HepG2 (cell line): ENCODE measurements at regions of chr12 and their contacts with region 1.

Region 1: GRCh38 chr12:75994186-75994731 is 37.3 kb downstream of the PHLDA1 start:
- DNase-seq: no peak
- ATAC-seq: no peak
- H3K4me3 ChIP-seq: no peak overlapping the region
- H3K27ac ChIP-seq: no peak overlapping the region
- H3K4me1 ChIP-seq: peaks cover 44% of the 10 kb centered on the region
- H3K27me3 ChIP-seq: no peaks in the 10 kb centered on the region
- CTCF ChIP-seq: no peak
- EP300 ChIP-seq: no peak
- POLR2A ChIP-seq: no peak
- RAD21 ChIP-seq: no peak

Region 2: DNA sequence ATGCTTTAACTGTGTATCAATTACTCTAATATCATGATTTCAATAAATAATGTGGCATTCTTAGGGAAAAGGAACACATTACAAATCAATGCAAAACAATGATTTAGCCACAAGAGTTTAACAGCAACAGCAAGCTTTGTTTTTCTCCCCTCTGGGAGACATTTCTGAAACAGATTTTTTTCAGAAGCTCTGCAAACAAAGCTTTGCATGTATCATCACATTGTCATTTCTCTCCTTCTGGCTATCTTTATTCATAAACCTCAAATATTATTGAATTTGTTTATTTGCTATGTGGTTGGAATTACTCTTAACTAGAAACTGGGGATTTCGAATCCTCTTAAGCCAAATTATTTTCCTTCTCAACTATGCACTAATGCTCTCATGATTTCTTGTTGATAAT is 1735.1 kb before region 1 on chr12:
- CTCF ChIA-PET with region 1: no interaction called
- POLR2A ChIA-PET with region 1: no interaction called
- in situ Hi-C with region 1: no loop called
- intact Hi-C with region 1: no loop called
- DNase-seq: no peak
- ATAC-seq: no peak
- H3K4me3 ChIP-seq: no peak overlapping the region
- H3K27ac ChIP-seq: no peak overlapping the region
- H3K4me1 ChIP-seq: no peaks in the 10 kb centered on the region
- H3K27me3 ChIP-seq: no peaks in the 10 kb centered on the region
- CTCF ChIP-seq: no peak
- EP300 ChIP-seq: no peak
- POLR2A ChIP-seq: no peak
- RAD21 ChIP-seq: no peak

Region 3: DNA sequence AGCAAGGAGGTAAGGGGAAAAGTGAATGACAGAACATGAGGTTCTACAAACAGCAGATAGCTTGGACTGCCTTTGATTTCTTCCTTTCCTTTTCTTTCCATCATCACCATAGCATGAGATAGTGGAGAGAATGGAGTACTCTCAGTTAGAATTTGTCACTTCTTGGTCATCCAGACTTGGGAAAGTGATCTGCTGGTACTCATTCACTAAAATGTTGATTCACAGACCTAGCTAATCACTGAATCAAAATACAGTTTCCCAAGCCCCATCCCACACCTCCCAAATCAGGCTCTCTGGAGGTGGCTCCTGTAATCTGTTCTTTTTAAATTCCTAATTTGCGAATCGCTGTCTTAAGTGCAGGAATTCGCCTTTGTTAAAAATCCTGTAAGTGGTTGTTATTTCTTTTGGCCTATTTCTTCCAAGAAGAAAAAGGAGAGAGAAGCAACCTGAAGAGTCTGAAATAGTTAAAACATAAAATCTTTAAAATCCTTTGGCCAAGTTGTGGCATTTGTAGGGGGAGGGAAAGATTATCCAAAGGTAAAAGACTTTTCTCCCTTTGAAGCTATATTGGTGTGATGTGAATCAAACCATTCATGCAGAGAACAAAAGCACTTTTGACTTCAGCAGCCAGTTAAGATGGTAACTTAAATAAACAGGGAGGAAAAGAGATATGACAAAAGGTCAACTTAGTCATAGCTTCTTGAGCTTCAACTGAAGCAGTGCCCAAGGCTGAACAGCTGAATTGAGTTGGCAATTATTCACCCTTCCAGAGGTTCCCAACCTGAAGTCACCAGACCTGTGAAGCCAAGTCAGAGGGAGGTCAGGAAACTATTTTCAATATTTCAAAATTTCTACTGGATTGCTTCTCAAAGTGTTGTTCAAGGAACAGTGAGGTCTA is 227.7 kb before region 1 on chr12:
- CTCF ChIA-PET with region 1: no interaction called
- POLR2A ChIA-PET with region 1: interaction called, 6 read pairs
- in situ Hi-C with region 1: no loop called
- intact Hi-C with region 1: loop called (anchors 5 kb)
- DNase-seq: peak; percentile 97
- ATAC-seq: peak; percentile 92
- H3K4me3 ChIP-seq: peak overlapping the region in 1 of 3 experiments; percentile 3; a peak in 1 of 6 replicates
- H3K27ac ChIP-seq: peak overlapping the region; percentile 86
- H3K4me1 ChIP-seq: peaks cover 57% of the 10 kb centered on the region
- H3K27me3 ChIP-seq: no peaks in the 10 kb centered on the region
- CTCF ChIP-seq: no peak
- EP300 ChIP-seq: peak in 1 of 2 experiments; percentile 98; a peak in 2 of 4 replicates
- POLR2A ChIP-seq: no peak
- RAD21 ChIP-seq: peak; percentile 30; the same call in 1 of the 2 replicates

Region 4: GRCh38 chr12:75944097-75944904 is 50.0 kb before region 1 on chr12:
- CTCF ChIA-PET with region 1: no interaction called
- POLR2A ChIA-PET with region 1: interaction called, 21 read pairs
- in situ Hi-C with region 1: no loop called
- intact Hi-C with region 1: loop called (anchors 1 kb)
- DNase-seq: peak; percentile 97
- ATAC-seq: peak; percentile 96
- H3K4me3 ChIP-seq: peak overlapping the region in 2 of 3 experiments; percentile 1 to 32; a peak in 2 of 6 replicates
- H3K27ac ChIP-seq: peak overlapping the region; percentile 96
- H3K4me1 ChIP-seq: peaks cover 54% of the 10 kb centered on the region
- H3K27me3 ChIP-seq: no peaks in the 10 kb centered on the region
- CTCF ChIP-seq: no peak
- EP300 ChIP-seq: peak; percentile 97 to 99
- POLR2A ChIP-seq: no peak; a peak in 1 of 4 replicates
- RAD21 ChIP-seq: no peak

Region 5: GRCh38 chr12:76020731-76021672 is 26.7 kb after region 1 on chr12:
- CTCF ChIA-PET with region 1: no interaction called
- POLR2A ChIA-PET with region 1: interaction called, 12 read pairs
- in situ Hi-C with region 1: no loop called
- intact Hi-C with region 1: loop called (anchors 1 kb)
- DNase-seq: no peak
- ATAC-seq: no peak
- H3K4me3 ChIP-seq: no peak overlapping the region
- H3K27ac ChIP-seq: peak overlapping the region; percentile 3
- H3K4me1 ChIP-seq: peaks cover 48% of the 10 kb centered on the region
- H3K27me3 ChIP-seq: no peaks in the 10 kb centered on the region
- CTCF ChIP-seq: no peak
- EP300 ChIP-seq: no peak
- POLR2A ChIP-seq: no peak
- RAD21 ChIP-seq: no peak